ENCODE measurements at regions of chr11 and their contacts with region 1.

Region 1: GRCh38 chr11:130131961-130132850 is 27.4 kb upstream of the ST14 start:
- DNase-seq: peak; percentile 60
- H3K4me3 Mint-ChIP-seq: no peak overlapping the region
- H3K27ac Mint-ChIP-seq: no peak overlapping the region
- H3K4me1 Mint-ChIP-seq: no peaks in the 10 kb centered on the region
- H3K27me3 Mint-ChIP-seq: no peaks in the 10 kb centered on the region

Region 2: GRCh38 chr11:129785383-129786111 is 346.7 kb before region 1 on chr11:
- CTCF ChIA-PET with region 1: interaction called, 20 read pairs
- DNase-seq: no peak
- H3K4me3 Mint-ChIP-seq: no peak overlapping the region
- H3K27ac Mint-ChIP-seq: no peak overlapping the region
- H3K4me1 Mint-ChIP-seq: peaks cover 7% of the 10 kb centered on the region
- H3K27me3 Mint-ChIP-seq: no peaks in the 10 kb centered on the region

Region 3: DNA sequence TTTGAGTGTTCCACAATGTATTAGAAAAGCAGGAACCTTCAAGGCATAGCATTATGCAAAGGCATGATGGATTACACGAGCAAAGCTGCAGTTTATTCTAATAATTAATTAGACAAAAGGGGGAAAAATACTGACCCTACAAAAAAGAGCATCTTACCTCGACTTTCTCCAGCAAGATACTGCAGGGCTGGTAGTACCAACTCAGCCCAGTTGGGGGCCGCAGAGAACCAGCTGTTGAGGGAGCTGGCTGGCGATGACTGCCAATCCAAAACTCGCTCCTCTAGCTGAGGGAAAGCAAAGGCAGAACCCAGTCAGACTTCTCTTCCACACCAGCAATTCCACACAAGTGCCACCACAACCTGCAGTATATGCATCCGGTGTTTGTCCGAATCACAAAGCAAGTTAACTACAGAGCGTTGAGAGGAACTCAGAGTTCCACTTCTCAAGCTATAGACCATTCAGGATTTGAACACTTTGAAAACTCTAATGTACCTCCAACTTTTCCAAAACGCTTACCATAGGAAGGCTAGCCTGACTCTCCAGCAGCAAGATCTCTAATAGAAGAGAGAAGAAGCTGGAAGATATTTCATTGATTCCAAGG is 250.5 kb before region 1 on chr11:
- CTCF ChIA-PET with region 1: interaction called, 27 read pairs
- DNase-seq: peak; percentile 68
- H3K4me3 Mint-ChIP-seq: no peak overlapping the region
- H3K27ac Mint-ChIP-seq: no peak overlapping the region
- H3K4me1 Mint-ChIP-seq: no peaks in the 10 kb centered on the region
- H3K27me3 Mint-ChIP-seq: no peaks in the 10 kb centered on the region

Region 4: DNA sequence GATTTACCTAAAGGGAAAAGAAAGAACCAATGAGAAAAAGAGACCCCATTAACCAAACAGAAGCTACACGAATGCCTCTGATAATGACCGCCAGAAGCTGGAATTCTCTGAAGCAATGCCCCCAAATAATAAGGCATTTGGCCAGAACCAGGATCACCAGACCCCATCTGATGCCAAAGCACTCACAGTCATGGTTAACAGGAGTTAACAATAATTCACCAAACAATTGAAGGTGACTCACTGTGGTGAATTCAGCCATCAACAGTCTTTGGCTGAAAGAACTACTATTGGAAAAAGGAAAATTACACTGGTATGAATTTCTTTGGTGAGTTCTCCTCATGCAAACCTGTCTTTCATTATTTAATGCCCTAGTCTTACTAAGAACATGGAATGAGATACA is 215.0 kb before region 1 on chr11:
- CTCF ChIA-PET with region 1: interaction called, 107 read pairs
- DNase-seq: no peak
- H3K4me3 Mint-ChIP-seq: no peak overlapping the region
- H3K27ac Mint-ChIP-seq: no peak overlapping the region
- H3K4me1 Mint-ChIP-seq: peaks cover 12% of the 10 kb centered on the region
- H3K27me3 Mint-ChIP-seq: no peaks in the 10 kb centered on the region

Region 5: GRCh38 chr11:129922674-129923073 is 209.5 kb before region 1 on chr11:
- CTCF ChIA-PET with region 1: interaction called, 107 read pairs
- DNase-seq: no peak
- H3K4me3 Mint-ChIP-seq: no peak overlapping the region
- H3K27ac Mint-ChIP-seq: peak overlapping the region; percentile 74
- H3K4me1 Mint-ChIP-seq: peaks cover 31% of the 10 kb centered on the region
- H3K27me3 Mint-ChIP-seq: no peaks in the 10 kb centered on the region

Region 6: GRCh38 chr11:130118636-130119387 is 13.4 kb before region 1 on chr11:
- CTCF ChIA-PET with region 1: interaction called, 12 read pairs
- DNase-seq: no peak
- H3K4me3 Mint-ChIP-seq: no peak overlapping the region
- H3K27ac Mint-ChIP-seq: no peak overlapping the region
- H3K4me1 Mint-ChIP-seq: peaks cover 43% of the 10 kb centered on the region
- H3K27me3 Mint-ChIP-seq: peaks cover 31% of the 10 kb centered on the region

Region 7: DNA sequence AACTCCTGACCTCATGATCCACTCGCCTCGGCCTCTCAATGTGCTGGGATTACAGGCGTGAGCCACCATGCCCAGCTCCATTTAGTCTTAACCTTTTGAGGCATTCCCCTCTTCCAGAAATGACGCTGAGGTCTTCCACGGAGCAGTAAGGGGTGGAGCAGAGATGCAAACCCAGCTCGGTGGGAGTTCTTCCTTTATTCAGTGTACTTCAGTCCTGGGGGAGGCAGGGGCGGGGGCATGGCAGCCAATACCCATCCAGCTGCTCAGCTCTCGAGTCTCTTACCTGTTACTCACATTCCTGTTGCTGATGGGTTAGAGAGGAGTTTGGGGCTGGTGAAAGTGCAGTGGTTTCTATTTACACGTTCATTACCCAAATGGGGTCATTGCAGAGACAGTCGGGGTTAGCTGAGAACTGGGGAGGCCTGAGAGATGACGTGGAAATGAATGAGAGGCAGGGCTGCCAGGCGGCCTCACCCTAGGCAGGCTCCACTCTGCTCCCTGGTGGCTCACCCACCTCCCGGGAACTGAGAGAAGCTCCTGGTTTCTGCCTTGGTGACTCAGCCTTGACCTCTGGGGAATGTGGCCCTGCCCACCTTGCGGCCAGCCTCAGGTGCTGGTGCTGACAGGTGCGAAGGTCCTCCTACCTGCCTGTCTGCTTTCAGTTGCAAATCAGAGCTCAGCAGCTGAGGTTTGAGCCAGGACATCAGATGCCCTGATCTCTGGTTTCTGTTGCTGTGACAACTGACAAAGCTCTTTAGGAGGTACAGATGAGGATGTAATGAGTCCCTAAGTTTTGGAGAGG is 14.0 kb after region 1 on chr11:
- CTCF ChIA-PET with region 1: interaction called, 11 read pairs
- DNase-seq: no peak
- H3K4me3 Mint-ChIP-seq: no peak overlapping the region
- H3K27ac Mint-ChIP-seq: peak overlapping the region; percentile 7
- H3K4me1 Mint-ChIP-seq: peaks cover 21% of the 10 kb centered on the region
- H3K27me3 Mint-ChIP-seq: peaks cover 6% of the 10 kb centered on the region

Region 8: DNA sequence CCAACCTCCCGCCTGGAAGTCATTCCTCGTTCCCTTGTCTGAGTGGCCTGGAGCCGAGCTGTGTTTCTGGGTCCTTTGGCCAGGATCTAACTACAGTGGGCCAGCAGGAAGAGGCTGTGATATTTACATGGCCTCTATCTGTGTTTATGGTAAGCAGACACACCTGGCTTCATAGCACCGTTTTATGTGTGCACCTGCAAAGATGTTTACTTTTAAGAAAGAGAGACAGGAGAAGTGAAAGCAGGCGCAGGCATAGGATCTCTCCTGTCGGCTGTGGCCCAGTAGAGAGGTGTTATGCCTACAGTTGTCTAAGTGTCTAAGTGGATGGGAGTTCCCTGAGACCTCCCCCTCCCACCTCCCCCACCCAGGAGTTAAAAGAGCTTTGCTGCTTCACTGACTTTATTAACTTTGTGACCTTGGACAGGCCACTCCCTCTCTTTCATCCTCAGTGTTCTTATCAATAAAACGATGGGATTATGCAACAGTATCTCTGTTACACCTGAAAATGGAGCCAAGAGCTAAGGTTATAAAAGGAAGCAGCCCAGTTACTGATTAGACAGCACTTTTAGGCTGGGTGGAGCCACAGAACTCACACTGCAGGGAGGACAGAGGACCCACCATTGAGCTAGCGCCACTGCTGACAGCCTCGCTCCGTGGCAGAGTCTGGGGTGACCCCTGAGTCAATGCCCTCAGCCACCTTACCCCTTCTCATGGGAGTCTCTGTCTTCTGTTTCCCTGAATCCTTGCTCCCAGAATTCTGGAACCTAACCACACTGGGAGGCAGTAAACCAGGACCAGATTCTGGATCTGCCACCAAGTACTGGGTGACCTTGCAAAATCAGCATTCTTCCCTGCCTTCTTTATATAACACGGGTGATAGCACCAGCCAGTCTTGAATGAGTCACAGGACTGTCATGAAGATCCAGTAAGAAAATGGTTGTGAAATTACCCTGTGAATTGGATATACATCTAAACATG is 49.4 kb after region 1 on chr11:
- CTCF ChIA-PET with region 1: no interaction called
- DNase-seq: no peak
- H3K4me3 Mint-ChIP-seq: no peak overlapping the region
- H3K27ac Mint-ChIP-seq: no peak overlapping the region
- H3K4me1 Mint-ChIP-seq: no peaks in the 10 kb centered on the region
- H3K27me3 Mint-ChIP-seq: peaks cover 19% of the 10 kb centered on the region

Measured in activated naive CD4-positive, alpha-beta T cell treated with anti-CD3 and anti-CD28 coated beads, Interleukin-2, amount 10 ng/mL, durations not matched to agents 7 days and 5 days (primary cell).